Aorta (tissue), 5 donors: ENCODE measurements at regions of chr6 and their contacts with region 1.

Region 1: GRCh38 chr6:159941286-159942113 is 27.4 kb upstream of the IGF2R start:
- DNase-seq: no peak
- ATAC-seq: peak; percentile 70
- H3K4me3 ChIP-seq: no peak overlapping the region
- H3K27ac ChIP-seq: no peak overlapping the region
- H3K4me1 ChIP-seq: peaks cover 2 to 5% of the 10 kb centered on the region in 2 donors
- H3K27me3 ChIP-seq: no peaks in the 10 kb centered on the region

Region 2: GRCh38 chr6:159829526-159829925 is 112.0 kb before region 1 on chr6:
- intact Hi-C with region 1: no loop called
- DNase-seq: no peak
- ATAC-seq: no peak
- H3K4me3 ChIP-seq: no peak overlapping the region
- H3K27ac ChIP-seq: no peak overlapping the region
- H3K4me1 ChIP-seq: no peaks in the 10 kb centered on the region
- H3K27me3 ChIP-seq: no peaks in the 10 kb centered on the region

Region 3: DNA sequence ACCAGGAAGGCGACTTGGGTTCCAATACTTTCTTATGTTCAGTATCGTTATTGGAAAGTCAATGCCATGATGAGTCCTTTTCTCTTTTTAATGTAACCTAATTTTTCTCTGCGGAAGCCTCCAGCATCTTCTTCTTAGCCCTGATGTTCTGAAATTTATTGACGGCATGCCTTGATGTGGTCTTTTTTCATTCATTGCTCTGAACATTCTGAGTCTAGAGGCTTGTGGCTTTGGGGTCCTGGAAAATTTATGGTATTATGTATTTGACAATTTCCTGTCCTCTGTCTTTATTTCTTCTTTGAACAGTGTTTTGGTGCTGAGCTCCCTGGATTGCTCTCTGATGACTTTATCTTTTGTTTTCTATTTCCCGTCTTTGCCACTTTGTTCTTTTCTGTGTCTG is 79.4 kb before region 1 on chr6:
- intact Hi-C with region 1: loop called (anchors 2 kb)
- DNase-seq: no peak
- ATAC-seq: no peak
- H3K4me3 ChIP-seq: no peak overlapping the region
- H3K27ac ChIP-seq: no peak overlapping the region
- H3K4me1 ChIP-seq: no peaks in the 10 kb centered on the region
- H3K27me3 ChIP-seq: no peaks in the 10 kb centered on the region

Region 4: DNA sequence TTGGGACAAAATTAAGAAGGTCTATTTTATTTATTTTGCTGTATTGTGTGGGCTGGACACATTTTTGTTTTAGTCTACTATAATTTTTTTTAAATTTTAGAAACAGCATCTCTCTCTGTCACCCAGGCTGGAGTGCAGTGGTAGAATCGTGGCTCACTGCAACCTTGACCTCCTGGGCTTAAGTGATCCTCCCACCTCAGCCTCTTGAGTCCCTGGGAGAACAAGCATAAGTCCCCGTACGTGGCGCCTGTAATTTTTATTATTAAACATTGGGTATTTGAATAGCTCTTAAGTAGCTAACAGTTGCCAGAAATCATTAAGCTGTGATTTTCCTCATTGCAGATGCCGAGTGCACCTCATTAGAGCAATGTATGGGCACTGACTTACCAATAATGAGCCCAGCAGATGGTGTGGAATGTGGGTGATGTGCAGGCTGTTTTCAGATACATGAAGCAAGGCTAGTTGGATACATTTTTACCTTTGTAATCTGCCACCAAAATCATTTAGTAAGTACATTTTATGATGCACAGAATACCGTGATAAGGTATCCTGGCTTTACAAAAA is 61.0 kb before region 1 on chr6:
- intact Hi-C with region 1: no loop called
- DNase-seq: no peak
- ATAC-seq: no peak
- H3K4me3 ChIP-seq: no peak overlapping the region
- H3K27ac ChIP-seq: no peak overlapping the region
- H3K4me1 ChIP-seq: no peaks in the 10 kb centered on the region
- H3K27me3 ChIP-seq: no peaks in the 10 kb centered on the region

Region 5: GRCh38 chr6:160022793-160023192 is 81.3 kb after region 1 on chr6:
- intact Hi-C with region 1: no loop called
- DNase-seq: no peak
- ATAC-seq: no peak
- H3K4me3 ChIP-seq: no peak overlapping the region
- H3K27ac ChIP-seq: no peak overlapping the region
- H3K4me1 ChIP-seq: no peaks in the 10 kb centered on the region
- H3K27me3 ChIP-seq: no peaks in the 10 kb centered on the region